Activated CD4-positive, alpha-beta memory T cell treated with anti-CD3 and anti-CD28 coated beads for 36 hours (primary cell): ENCODE measurements at regions of chr9 and their contacts with region 1.

Region 1: GRCh38 chr9:655875-656274 is 185.6 kb upstream of the DMRT1 start:
- DNase-seq: no peak
- H3K4me3 Mint-ChIP-seq: no peak overlapping the region
- H3K27ac Mint-ChIP-seq: no peak overlapping the region
- H3K4me1 Mint-ChIP-seq: peaks cover 13% of the 10 kb centered on the region
- H3K27me3 Mint-ChIP-seq: no peaks in the 10 kb centered on the region

Region 2: GRCh38 chr9:638152-638551 is 17.7 kb before region 1 on chr9:
- CTCF ChIA-PET with region 1: no interaction called
- POLR2A ChIA-PET with region 1: no interaction called
- intact Hi-C with region 1: loop called (anchors 2 kb)
- DNase-seq: peak; percentile 16
- H3K4me3 Mint-ChIP-seq: no peak overlapping the region
- H3K27ac Mint-ChIP-seq: no peak overlapping the region
- H3K4me1 Mint-ChIP-seq: peaks cover 29% of the 10 kb centered on the region
- H3K27me3 Mint-ChIP-seq: no peaks in the 10 kb centered on the region

Region 3: DNA sequence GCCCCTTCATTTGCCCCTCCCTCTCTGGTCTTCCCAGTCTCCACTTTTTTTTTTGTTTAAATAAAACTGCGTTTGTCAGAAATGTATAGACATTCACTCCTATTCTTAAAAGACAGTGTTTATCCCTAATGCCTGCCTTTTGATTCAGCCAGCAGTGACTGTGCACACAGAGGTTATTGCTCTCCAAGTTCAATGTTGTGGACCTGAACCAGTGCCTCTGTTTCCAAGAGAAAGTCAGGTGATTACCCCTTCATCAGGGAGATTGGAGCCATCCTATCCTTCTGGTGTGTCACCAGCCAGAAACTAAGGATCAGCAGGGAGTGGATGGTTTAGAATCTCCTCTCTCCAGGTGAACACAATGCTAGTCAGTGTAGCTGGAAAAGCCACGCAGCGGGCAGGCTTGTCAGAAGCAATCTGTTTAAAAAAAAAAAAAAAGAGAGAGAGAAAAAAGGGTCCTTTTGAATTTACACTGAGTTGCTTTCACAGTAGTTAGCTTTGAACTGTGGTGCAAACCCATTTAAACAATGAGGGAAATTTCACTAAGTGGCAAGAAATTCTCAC is 18.2 kb after region 1 on chr9:
- CTCF ChIA-PET with region 1: no interaction called
- POLR2A ChIA-PET with region 1: no interaction called
- intact Hi-C with region 1: loop called (anchors 1 kb)
- DNase-seq: no peak
- H3K4me3 Mint-ChIP-seq: no peak overlapping the region
- H3K27ac Mint-ChIP-seq: no peak overlapping the region
- H3K4me1 Mint-ChIP-seq: peaks cover 20% of the 10 kb centered on the region
- H3K27me3 Mint-ChIP-seq: no peaks in the 10 kb centered on the region